Panc1 (cell line): ENCODE measurements at regions of chr5 and their contacts with region 1.

Region 1: GRCh38 chr5:108345541-108346171 is 36.2 kb downstream of the FBXL17 start:
- DNase-seq: peak; percentile 18
- ATAC-seq: peak; percentile 80
- H3K4me3 ChIP-seq: no peak overlapping the region
- H3K27ac ChIP-seq: no peak overlapping the region
- H3K4me1 ChIP-seq: no peaks in the 10 kb centered on the region
- H3K27me3 ChIP-seq: no peaks in the 10 kb centered on the region
- CTCF ChIP-seq: peak; percentile 27; the same call in 1 of the 2 replicates

Region 2: GRCh38 chr5:108148715-108149139 is 196.9 kb before region 1 on chr5:
- CTCF ChIA-PET with region 1: no interaction called
- POLR2A ChIA-PET with region 1: no interaction called
- in situ Hi-C with region 1: no loop called
- intact Hi-C with region 1: loop called (anchors 5 kb)
- DNase-seq: peak; percentile 18
- ATAC-seq: peak; percentile 68; the same call in 1 of the 2 replicates
- H3K4me3 ChIP-seq: no peak overlapping the region
- H3K27ac ChIP-seq: no peak overlapping the region
- H3K4me1 ChIP-seq: no peaks in the 10 kb centered on the region
- H3K27me3 ChIP-seq: no peaks in the 10 kb centered on the region
- CTCF ChIP-seq: peak; percentile 63; the same call in 1 of the 2 replicates

Region 3: DNA sequence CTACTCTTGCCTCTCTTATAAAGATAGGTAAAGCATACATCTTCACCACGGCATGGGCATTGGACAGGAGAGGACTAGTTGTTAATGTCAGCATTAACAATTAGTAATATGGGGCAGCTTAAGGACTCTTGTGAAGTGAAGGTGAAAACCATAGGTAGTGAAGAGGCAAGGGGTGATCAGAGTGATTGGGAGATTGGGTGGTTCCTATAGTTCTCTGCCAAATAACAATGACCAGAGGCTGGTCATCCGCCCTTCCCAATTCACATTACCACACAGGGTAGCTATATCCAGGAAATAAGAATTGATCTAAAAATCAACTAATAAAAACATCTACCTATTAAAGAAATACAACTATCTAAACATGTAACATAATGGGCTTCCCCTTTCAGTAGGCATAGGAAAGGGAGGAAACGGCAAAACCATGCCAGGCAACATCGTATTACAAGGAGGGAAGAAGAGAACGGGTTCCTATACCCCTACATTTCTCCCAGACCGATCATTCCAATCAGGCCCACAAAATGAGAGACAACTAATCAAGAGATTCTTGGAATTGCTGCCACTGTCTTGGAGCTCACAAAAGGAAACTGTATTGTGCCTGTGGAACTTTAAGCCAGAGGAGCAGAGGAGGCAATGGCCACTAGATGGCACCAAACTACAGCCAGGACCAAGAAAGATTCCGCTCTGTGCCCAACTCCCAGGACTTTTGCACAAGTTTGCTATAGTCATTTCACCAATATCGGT is 85.4 kb before region 1 on chr5:
- CTCF ChIA-PET with region 1: interaction called, 14 read pairs
- POLR2A ChIA-PET with region 1: no interaction called
- in situ Hi-C with region 1: no loop called
- intact Hi-C with region 1: loop called (anchors 2 kb)
- DNase-seq: peak; percentile 72
- ATAC-seq: peak; percentile 100
- H3K4me3 ChIP-seq: no peak overlapping the region
- H3K27ac ChIP-seq: no peak overlapping the region; the same call in 1 of the 2 replicates
- H3K4me1 ChIP-seq: 0 out of 2 replicates have a peak, but pooled peaks cover 8% of the 10 kb centered on the region
- H3K27me3 ChIP-seq: no peaks in the 10 kb centered on the region
- CTCF ChIP-seq: peak; percentile 96

Region 4: DNA sequence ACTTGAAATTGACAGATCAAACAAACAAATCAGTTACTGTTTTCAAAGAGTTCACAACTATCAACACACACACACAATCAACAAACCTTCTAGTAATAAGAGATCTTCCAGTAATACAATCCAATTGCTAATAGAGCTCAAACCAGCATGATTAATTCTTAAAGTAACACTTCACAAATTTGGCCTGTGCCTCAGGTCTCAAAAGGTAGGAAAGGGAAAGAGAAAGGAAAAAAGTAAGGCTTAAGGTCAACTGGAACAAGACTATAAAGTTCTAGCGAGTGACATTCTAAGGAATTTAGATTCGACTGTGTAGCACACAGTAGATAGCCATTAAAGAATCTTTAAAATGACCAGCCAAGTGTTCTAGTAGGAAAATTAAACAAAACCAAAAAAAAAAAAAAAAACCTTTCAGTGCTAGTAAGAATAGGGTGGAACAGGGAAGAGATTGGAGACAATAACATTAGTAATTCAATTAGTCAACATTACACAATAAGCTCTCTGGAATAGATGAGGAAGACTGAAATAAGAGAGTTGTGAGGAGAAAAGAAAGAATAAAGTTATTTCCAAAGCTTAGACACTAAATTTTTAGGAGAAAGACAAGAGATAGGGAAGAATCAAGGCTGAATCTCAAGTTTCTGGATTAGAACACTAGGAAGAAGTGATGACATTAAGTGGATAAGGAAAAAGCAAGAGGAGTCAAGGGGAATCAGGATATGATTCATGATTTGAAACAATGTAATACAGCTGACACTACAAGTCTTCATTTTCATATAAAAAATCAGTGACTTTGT is 49.9 kb before region 1 on chr5:
- CTCF ChIA-PET with region 1: no interaction called
- POLR2A ChIA-PET with region 1: no interaction called
- in situ Hi-C with region 1: no loop called
- intact Hi-C with region 1: no loop called
- DNase-seq: peak; percentile 22
- ATAC-seq: no peak
- H3K4me3 ChIP-seq: no peak overlapping the region
- H3K27ac ChIP-seq: no peak overlapping the region
- H3K4me1 ChIP-seq: no peaks in the 10 kb centered on the region
- H3K27me3 ChIP-seq: no peaks in the 10 kb centered on the region
- CTCF ChIP-seq: no peak